MCF 10A (cell line): ENCODE measurements at regions of chr1 and their contacts with region 1.

Region 1: GRCh38 chr1:165481820-165482532 is 37.0 kb upstream of the RXRG start:
- DNase-seq: peak; percentile 99
- H3K4me3 Mint-ChIP-seq: no peak overlapping the region
- H3K27ac Mint-ChIP-seq: peak overlapping the region; percentile 7
- H3K4me1 Mint-ChIP-seq: peaks cover 14% of the 10 kb centered on the region
- H3K27me3 Mint-ChIP-seq: peaks cover 43% of the 10 kb centered on the region
- CTCF ChIP-seq: no peak

Region 2: GRCh38 chr1:165409657-165410358 is 72.2 kb before region 1 on chr1:
- CTCF ChIA-PET with region 1: no interaction called
- POLR2A ChIA-PET with region 1: no interaction called
- intact Hi-C with region 1: loop called (anchors 5 kb)
- DNase-seq: no peak
- H3K4me3 Mint-ChIP-seq: no peak overlapping the region
- H3K27ac Mint-ChIP-seq: no peak overlapping the region
- H3K4me1 Mint-ChIP-seq: no peaks in the 10 kb centered on the region
- H3K27me3 Mint-ChIP-seq: peaks cover 32% of the 10 kb centered on the region
- CTCF ChIP-seq: no peak